Activated naive CD4-positive, alpha-beta T cell treated with anti-CD3 and anti-CD28 coated beads for 36 hours (primary cell): ENCODE measurements at regions of chr20 and their contacts with region 1.

Region 1: GRCh38 chr20:53216856-53217576 is 244.9 kb downstream of the TSHZ2 start:
- DNase-seq: peak; percentile 88
- H3K4me3 Mint-ChIP-seq: peak overlapping the region; percentile 38
- H3K27ac Mint-ChIP-seq: peak overlapping the region; percentile 88
- H3K4me1 Mint-ChIP-seq: peaks cover 55% of the 10 kb centered on the region
- H3K27me3 Mint-ChIP-seq: no peaks in the 10 kb centered on the region

Region 2: DNA sequence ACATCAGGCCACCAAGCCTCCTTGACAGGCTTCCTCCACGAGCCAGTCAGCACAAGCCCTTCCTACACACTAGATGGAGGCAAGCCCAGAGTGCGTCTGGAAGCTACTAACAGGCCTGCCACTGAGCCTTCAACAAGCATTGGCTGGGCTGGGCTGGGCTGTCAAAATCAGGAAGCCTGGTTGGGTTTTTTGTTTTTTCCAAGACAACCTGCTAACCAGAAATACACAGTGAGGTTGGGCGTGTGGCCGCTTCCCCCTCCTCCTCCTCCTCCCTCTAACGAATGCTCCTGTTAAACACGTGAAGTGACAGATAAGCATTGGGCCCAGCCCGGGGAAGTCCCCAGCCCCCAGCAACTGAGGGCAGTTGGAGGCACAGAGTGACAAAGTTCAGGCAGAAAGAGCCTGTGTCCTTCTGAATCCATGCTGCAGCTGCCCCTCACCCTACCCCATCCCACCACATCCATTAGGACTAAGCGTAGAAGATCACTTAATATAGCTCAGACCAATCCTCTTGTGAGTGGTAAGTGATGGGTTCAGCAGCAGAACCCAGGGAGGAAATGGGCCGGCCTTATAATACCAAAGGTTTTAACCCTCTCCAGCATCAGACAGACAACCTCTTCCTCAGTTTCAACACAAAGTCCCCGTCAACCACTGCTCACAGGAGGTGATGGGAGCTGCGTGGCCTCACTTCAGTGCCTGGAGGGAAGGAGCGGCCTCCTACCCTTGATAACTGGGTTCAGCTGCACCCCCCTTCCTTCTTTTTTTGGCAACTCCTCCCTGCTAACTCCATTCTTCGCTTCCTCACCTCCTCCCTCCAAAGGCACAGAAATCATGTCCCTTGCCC is 1675.6 kb before region 1 on chr20:
- CTCF ChIA-PET with region 1: no interaction called
- intact Hi-C with region 1: no loop called
- DNase-seq: peak; percentile 91
- H3K4me3 Mint-ChIP-seq: peak overlapping the region; percentile 96
- H3K27ac Mint-ChIP-seq: peak overlapping the region; percentile 98
- H3K4me1 Mint-ChIP-seq: peaks cover 42% of the 10 kb centered on the region
- H3K27me3 Mint-ChIP-seq: no peaks in the 10 kb centered on the region

Region 3: DNA sequence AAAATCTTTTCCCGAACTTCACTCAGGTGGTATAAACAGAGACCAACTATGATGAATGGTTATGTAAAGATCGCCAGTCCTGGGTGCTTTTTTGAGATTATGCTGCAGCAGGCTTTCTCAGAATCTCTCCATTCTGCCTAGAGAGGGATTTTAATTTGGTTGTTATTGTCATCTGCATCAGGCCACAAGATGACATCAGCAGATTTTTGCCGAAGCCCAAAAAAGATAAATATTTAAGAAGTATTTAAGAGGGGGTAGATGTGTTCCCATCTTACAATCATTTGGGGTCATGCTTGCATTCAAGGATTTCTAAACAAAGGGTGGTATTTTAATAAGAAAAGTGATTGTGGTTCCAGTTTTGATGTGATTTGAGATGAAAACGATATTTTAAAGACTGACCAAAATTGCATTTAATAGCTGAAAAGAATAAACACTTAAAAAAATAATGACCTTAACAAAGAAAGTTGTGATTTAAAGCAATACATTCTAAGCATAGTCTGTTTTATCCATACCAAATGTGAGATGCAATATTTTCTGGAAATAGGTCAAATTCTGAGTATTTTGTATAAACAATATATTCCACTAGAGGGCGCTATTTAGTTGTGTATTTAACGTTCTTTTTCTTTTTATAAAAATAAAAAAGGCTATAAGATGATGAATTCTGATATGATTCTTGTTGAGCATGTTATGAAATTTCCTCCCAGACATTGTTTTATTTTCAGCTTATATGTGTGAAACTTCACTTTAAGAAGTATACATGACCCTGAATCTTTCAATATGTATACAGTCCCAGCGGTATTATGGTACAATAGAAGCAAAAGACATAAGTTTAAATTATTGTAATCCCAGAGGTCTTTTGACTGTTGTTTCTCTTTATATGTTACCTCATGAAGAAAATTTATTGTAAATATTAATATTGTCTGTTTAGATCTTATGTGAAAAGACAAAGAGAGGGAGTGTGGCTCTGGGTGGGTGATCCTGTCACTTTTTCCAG is 974.5 kb before region 1 on chr20:
- CTCF ChIA-PET with region 1: no interaction called
- intact Hi-C with region 1: loop called (anchors 10 kb)
- DNase-seq: no peak
- H3K4me3 Mint-ChIP-seq: no peak overlapping the region
- H3K27ac Mint-ChIP-seq: no peak overlapping the region
- H3K4me1 Mint-ChIP-seq: no peaks in the 10 kb centered on the region
- H3K27me3 Mint-ChIP-seq: no peaks in the 10 kb centered on the region

Region 4: GRCh38 chr20:52494244-52494643 is 722.8 kb before region 1 on chr20:
- CTCF ChIA-PET with region 1: no interaction called
- intact Hi-C with region 1: loop called (anchors 5 kb)
- DNase-seq: peak; percentile 82
- H3K4me3 Mint-ChIP-seq: peak overlapping the region; percentile 46
- H3K27ac Mint-ChIP-seq: peak overlapping the region; percentile 50
- H3K4me1 Mint-ChIP-seq: peaks cover 23% of the 10 kb centered on the region
- H3K27me3 Mint-ChIP-seq: no peaks in the 10 kb centered on the region

Region 5: DNA sequence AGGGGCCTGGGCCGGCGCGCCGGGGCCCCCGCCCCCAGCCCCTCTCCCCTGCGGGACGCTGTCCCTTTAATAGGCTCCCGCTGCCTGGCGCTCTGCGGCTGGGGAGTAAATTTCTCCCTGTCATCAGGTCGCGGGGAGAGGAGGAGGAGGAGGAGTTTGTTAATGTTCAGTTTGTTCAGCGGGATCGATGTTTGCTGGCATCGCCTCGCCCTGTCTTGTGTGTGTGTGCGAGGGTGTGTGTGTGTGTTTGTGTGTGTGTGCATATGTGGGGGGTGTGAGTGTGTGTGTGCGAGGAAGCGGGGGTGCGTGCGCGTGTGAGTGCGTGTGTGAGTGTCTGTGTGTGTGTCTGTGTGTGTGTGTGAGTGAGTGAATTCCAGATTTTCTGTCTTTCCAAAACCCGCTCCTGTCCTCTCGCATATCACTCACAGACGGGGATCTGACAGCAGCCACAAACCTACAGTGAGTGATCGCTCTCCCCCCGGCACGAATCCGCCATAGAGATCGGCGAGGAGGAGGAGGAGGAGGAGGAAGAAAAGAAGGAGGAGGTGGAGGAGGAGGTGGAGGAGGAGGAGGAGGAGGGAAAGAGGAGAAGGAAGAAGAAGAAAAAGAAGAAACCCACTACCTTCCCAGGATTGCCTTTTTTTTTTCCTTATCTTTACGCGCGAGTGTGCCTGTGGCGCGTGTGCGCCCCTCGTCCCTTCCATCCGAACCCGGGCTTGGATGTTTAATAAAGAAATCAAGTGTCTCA is 244.7 kb before region 1 on chr20 and contains the start of gene TSHZ2:
- CTCF ChIA-PET with region 1: no interaction called
- intact Hi-C with region 1: loop called (anchors 1 kb)
- DNase-seq: peak; percentile 73
- H3K4me3 Mint-ChIP-seq: peak within 1 kb of the TSS; percentile 94
- H3K27ac Mint-ChIP-seq: peak within 1 kb of the TSS; percentile 98
- H3K4me1 Mint-ChIP-seq: peaks cover 34% of the 10 kb centered on the region
- H3K27me3 Mint-ChIP-seq: no peaks in the 10 kb centered on the region
- total RNA-seq, gene TSHZ2: 34.1 to 37.8 TPM

Region 6: GRCh38 chr20:53032478-53032932 is 184.5 kb before region 1 on chr20:
- CTCF ChIA-PET with region 1: no interaction called
- intact Hi-C with region 1: loop called (anchors 1 kb)
- DNase-seq: no peak
- H3K4me3 Mint-ChIP-seq: no peak overlapping the region
- H3K27ac Mint-ChIP-seq: no peak overlapping the region
- H3K4me1 Mint-ChIP-seq: peaks cover 70% of the 10 kb centered on the region
- H3K27me3 Mint-ChIP-seq: no peaks in the 10 kb centered on the region

Region 7: GRCh38 chr20:53077373-53078205 is 139.4 kb before region 1 on chr20:
- CTCF ChIA-PET with region 1: no interaction called
- intact Hi-C with region 1: loop called (anchors 2 kb)
- DNase-seq: peak; percentile 59
- H3K4me3 Mint-ChIP-seq: no peak overlapping the region
- H3K27ac Mint-ChIP-seq: no peak overlapping the region
- H3K4me1 Mint-ChIP-seq: peaks cover 46% of the 10 kb centered on the region
- H3K27me3 Mint-ChIP-seq: no peaks in the 10 kb centered on the region

Region 8: DNA sequence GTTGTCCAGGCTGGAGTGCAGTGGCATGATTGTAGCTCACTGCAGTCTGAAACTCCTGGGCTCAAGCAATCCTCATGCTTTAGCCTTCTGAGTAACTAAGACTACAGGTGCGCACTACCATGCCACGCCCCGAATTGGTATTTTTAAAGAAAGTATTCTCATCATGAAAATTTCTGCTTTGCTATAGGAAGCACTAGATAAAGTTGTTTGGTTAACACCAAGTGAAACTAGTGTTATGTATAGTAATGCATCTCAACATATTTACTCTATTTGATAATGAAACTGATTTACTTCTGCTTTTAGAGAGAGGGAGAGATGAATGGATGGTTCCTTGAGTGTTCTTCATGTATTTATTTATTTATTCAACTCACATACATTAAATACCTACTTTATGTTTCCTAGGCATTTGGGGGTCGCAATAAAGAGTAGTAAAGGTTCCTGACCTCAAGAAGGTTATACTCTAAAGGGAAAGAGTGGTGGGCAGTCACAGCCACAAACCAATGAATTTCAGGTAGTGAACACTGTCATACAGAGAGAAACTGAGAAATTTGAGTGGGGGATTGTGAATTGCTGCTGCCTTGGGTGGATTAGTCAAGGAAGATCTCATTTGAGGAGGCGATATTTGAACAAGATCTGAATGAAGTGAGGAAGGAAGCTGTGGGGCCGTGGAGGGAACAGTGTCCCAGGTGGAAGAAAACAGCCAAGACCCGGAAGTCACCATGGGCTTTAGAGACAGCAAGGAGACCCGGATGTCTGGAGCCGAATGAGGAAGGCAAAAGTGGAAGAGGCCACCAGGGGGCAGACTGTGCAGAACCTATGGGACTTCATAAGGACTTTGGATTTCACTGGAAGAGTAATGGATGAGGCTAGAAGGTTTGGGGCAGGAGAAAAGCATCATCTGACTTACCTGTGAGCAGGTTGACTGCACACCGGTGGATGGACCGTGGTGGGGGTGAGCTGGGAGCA is 59.3 kb before region 1 on chr20:
- CTCF ChIA-PET with region 1: interaction called, 3 read pairs
- intact Hi-C with region 1: loop called (anchors 2 kb)
- DNase-seq: peak; percentile 46
- H3K4me3 Mint-ChIP-seq: no peak overlapping the region
- H3K27ac Mint-ChIP-seq: no peak overlapping the region
- H3K4me1 Mint-ChIP-seq: peaks cover 56% of the 10 kb centered on the region
- H3K27me3 Mint-ChIP-seq: no peaks in the 10 kb centered on the region

Region 9: GRCh38 chr20:53227523-53227922 is 10.5 kb after region 1 on chr20:
- CTCF ChIA-PET with region 1: no interaction called
- intact Hi-C with region 1: no loop called
- DNase-seq: no peak
- H3K4me3 Mint-ChIP-seq: no peak overlapping the region
- H3K27ac Mint-ChIP-seq: no peak overlapping the region
- H3K4me1 Mint-ChIP-seq: peaks cover 15% of the 10 kb centered on the region
- H3K27me3 Mint-ChIP-seq: no peaks in the 10 kb centered on the region

Region 10: DNA sequence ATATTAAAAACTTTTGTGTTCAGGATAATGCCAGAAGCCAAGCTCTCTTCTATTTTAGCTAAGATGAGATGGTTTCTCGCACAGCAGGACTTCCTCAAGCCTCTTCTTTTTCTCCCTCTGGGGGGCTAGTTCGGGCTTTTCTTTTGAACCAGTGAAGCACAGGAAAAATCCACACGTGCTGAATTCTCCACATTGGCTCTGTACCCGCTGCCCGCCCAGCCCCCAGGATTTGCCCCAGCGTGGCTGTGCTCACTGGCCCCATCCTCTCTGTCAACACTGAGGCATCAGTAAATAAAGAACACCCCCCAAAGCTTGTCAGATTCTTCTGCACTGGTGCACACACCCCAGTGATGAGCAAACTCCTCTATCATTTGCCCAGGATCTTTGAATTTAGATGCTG is 143.8 kb after region 1 on chr20:
- CTCF ChIA-PET with region 1: no interaction called
- intact Hi-C with region 1: no loop called
- DNase-seq: no peak
- H3K4me3 Mint-ChIP-seq: no peak overlapping the region
- H3K27ac Mint-ChIP-seq: no peak overlapping the region
- H3K4me1 Mint-ChIP-seq: no peaks in the 10 kb centered on the region
- H3K27me3 Mint-ChIP-seq: no peaks in the 10 kb centered on the region

Region 11: DNA sequence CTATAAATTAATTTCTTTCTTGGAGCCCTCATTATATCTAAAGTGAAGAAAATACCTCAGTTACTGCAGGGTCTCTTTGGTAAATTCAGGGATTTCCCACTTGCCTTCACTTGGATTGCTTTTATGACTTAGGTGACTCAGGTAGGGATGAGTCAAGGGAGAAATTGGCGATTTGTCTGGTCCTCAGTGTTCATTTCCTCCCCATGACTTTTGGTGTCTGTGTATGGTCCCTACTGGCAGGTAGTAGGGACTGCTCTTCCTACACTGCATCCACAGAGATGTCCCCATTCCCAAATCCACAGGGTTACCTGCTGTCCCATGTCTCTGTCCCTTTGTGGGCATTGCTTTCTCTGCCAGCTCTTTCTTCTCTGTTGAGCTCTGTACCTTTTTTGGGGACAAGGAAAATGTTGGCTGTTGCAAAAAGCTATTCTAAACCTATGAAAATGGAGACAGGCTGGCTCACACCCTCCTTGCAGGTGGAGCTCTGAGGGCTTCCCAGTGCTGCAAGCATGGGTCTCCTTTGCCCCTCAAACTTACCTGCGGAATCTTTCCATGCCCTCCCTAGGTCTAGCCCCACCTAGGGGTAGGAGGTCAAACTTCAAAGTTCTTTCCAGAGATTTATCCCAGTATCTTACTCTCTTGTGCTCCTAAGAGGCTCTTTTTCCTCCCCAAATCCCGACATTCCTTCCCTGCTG is 164.7 kb after region 1 on chr20:
- CTCF ChIA-PET with region 1: no interaction called
- intact Hi-C with region 1: no loop called
- DNase-seq: no peak
- H3K4me3 Mint-ChIP-seq: no peak overlapping the region
- H3K27ac Mint-ChIP-seq: no peak overlapping the region
- H3K4me1 Mint-ChIP-seq: peaks cover 10% of the 10 kb centered on the region
- H3K27me3 Mint-ChIP-seq: no peaks in the 10 kb centered on the region